Activated CD4-positive, alpha-beta T cell treated with anti-CD3 and anti-CD28 coated beads, Interleukin-2, amount 10 ng/mL, durations not matched to agents 24 days and 14 days (primary cell): ENCODE measurements at regions of chr11 and their contacts with region 1.

Region 1: GRCh38 chr11:64304316-64305072 is 830 bp upstream of the ESRRA start:
- DNase-seq: peak; percentile 98
- H3K4me3 Mint-ChIP-seq: peak overlapping the region; percentile 89
- H3K27ac Mint-ChIP-seq: peak overlapping the region; percentile 99
- H3K4me1 Mint-ChIP-seq: peaks cover 26% of the 10 kb centered on the region
- H3K27me3 Mint-ChIP-seq: peaks cover 17% of the 10 kb centered on the region

Region 2: GRCh38 chr11:64000026-64000739 is 304.3 kb before region 1 on chr11:
- intact Hi-C with region 1: loop called (anchors 2 kb)
- DNase-seq: peak; percentile 94
- H3K4me3 Mint-ChIP-seq: peak overlapping the region; percentile 39
- H3K27ac Mint-ChIP-seq: no peak overlapping the region
- H3K4me1 Mint-ChIP-seq: peaks cover 3% of the 10 kb centered on the region
- H3K27me3 Mint-ChIP-seq: peaks cover 1% of the 10 kb centered on the region

Region 3: GRCh38 chr11:64204464-64204989 is 100.0 kb before region 1 on chr11:
- intact Hi-C with region 1: loop called (anchors 1 kb)
- DNase-seq: peak; percentile 93
- H3K4me3 Mint-ChIP-seq: peak overlapping the region; percentile 69
- H3K27ac Mint-ChIP-seq: peak overlapping the region; percentile 80
- H3K4me1 Mint-ChIP-seq: peaks cover 33% of the 10 kb centered on the region
- H3K27me3 Mint-ChIP-seq: no peaks in the 10 kb centered on the region

Region 4: DNA sequence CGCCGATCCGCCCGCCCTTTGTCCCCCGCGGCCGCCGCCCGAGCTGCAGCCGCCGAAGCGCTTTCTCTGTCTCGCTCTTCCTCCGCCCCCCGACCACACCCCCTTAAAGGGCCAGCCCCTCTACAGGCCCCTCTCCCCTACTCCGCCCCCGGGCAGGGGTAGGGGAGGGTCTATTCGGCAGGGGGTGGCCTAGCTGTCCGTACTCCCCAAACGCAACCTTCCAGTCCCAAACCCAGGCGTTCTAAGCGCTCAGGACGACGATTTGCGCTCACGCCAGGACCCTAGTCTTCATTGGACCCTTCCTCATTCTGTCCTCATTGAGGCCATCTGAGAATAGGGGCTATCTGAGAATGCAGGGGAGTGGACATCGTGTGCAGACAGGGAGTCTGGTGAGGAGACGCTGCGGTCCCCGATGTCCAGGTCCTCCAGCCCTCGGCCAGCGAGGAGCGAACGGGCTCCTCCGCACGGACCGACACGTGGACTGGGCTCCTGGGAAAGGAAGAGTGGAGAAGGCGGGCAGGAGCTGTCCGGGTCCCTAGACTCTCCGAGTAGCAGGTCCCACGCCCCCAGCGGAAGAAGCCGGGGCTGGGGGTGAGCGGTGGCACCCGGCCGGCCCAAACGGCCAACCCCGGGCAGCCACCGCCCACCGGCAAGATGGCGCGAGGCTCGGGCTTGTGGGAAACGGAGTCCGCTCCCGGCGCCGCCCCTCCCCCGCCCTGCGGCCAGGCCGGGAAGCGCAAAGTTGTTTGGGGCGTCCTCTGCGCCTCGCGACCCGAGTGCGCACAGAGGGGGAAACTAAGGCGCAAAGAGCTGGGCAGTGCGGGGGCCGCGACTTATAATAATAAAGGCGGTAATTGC is 57.4 kb before region 1 on chr11 and contains the start of gene PPP1R14B:
- intact Hi-C with region 1: loop called (anchors 1 kb)
- DNase-seq: peak; percentile 95
- H3K4me3 Mint-ChIP-seq: peak within 1 kb of the TSS; percentile 90
- H3K27ac Mint-ChIP-seq: peak within 1 kb of the TSS; percentile 94
- H3K4me1 Mint-ChIP-seq: peaks cover 29% of the 10 kb centered on the region
- H3K27me3 Mint-ChIP-seq: no peaks in the 10 kb centered on the region
- total RNA-seq, gene PPP1R14B: 284 TPM in 2 replicates

Region 5: DNA sequence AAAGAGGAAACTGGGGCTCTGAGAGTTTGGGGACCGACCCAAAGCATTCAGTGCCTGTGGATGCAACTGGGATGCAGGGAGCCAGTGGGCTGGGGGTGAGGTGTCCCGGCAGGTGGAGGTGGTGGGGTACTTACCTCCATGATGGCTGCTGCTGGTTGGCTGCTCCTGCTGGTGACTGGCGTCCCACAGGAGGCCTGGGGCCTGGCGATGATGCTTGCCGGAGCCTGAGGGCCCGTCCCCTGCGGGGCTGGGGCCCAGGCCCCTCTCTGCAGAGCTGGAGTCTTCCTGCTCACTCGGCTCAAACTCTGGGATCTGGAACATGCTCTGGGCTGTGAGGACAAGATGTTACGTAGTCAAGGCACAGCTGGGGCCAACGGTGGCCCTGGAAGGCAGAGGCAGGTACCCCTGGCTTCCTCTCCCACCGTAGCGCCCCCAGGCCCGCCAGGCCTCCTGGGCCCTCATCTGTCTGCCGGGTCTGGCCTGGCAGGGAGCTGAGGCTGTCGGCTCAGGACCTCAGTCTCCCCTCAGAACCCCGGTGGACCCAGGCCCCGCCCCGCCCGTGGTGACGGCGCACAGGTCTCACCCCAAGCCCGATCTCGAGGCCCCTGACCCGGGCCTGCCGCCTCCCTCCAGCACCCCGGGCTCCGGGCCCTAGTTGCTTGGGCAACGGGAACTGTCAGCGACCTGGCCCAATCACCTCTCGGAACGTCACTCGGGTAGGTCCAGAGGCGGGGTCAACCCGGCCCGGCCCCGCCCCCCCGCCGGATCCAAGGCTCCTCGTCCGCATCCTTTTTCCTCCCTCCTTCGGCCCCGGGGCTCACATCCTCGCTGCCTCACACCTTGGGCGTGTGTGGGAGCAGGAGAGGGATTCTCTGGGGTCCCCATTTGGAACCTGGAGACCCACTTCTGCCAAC is 20.2 kb before region 1 on chr11 and contains the start of gene BAD:
- intact Hi-C with region 1: loop called (anchors 1 kb)
- DNase-seq: peak; percentile 97
- H3K4me3 Mint-ChIP-seq: peak within 1 kb of the TSS; percentile 89
- H3K27ac Mint-ChIP-seq: peak within 1 kb of the TSS; percentile 94
- H3K4me1 Mint-ChIP-seq: peaks cover 17% of the 10 kb centered on the region
- H3K27me3 Mint-ChIP-seq: no peaks in the 10 kb centered on the region
- total RNA-seq, gene BAD: 34.0 and 35.5 TPM in 2 replicates

Region 6: DNA sequence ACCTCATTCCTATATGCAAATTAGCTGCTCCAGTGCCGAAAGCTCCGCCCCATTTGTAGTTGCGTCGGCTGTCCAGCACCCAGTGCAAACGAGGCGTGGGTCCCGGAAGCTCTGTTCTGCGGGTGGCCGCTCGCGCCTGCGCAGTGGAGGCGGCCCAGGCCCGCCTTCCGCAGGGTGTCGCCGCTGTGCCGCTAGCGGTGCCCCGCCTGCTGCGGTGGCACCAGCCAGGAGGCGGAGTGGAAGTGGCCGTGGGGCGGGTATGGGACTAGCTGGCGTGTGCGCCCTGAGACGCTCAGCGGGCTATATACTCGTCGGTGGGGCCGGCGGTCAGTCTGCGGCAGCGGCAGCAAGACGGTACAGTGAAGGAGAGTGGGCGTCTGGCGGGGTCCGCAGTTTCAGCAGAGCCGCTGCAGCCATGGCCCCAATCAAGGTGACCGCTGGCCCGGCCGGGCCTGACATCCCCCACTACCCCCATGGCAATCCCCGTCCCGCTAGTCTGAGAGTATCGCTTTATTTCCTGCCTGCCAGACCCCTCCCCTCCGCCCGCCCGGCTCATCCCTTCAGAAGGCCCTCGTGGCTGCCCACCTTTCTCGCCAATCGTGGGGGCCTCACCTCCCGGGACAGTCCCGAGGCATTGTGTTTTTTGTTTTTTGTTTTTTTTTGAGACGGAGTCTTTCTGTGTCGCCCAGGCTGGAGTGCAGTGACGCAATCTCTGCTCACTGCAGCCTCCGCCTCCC is 13.6 kb after region 1 on chr11 and contains the start of gene PRDX5:
- intact Hi-C with region 1: loop called (anchors 1 kb)
- DNase-seq: peak; percentile 99
- H3K4me3 Mint-ChIP-seq: peak within 1 kb of the TSS; percentile 92
- H3K27ac Mint-ChIP-seq: peak within 1 kb of the TSS; percentile 97
- H3K4me1 Mint-ChIP-seq: peaks cover 32% of the 10 kb centered on the region
- H3K27me3 Mint-ChIP-seq: no peaks in the 10 kb centered on the region
- total RNA-seq, gene PRDX5: 98.0 and 104 TPM in 2 replicates

Region 7: GRCh38 chr11:64778508-64779346 is 474.2 kb after region 1 on chr11 and contains the start of gene SF1:
- intact Hi-C with region 1: loop called (anchors 5 kb)
- DNase-seq: peak; percentile 100
- H3K4me3 Mint-ChIP-seq: peak within 1 kb of the TSS; percentile 94
- H3K27ac Mint-ChIP-seq: peak within 1 kb of the TSS; percentile 98
- H3K4me1 Mint-ChIP-seq: peaks cover 49% of the 10 kb centered on the region
- H3K27me3 Mint-ChIP-seq: no peaks in the 10 kb centered on the region
- total RNA-seq, gene SF1: 522 and 525 TPM in 2 replicates

Region 8: DNA sequence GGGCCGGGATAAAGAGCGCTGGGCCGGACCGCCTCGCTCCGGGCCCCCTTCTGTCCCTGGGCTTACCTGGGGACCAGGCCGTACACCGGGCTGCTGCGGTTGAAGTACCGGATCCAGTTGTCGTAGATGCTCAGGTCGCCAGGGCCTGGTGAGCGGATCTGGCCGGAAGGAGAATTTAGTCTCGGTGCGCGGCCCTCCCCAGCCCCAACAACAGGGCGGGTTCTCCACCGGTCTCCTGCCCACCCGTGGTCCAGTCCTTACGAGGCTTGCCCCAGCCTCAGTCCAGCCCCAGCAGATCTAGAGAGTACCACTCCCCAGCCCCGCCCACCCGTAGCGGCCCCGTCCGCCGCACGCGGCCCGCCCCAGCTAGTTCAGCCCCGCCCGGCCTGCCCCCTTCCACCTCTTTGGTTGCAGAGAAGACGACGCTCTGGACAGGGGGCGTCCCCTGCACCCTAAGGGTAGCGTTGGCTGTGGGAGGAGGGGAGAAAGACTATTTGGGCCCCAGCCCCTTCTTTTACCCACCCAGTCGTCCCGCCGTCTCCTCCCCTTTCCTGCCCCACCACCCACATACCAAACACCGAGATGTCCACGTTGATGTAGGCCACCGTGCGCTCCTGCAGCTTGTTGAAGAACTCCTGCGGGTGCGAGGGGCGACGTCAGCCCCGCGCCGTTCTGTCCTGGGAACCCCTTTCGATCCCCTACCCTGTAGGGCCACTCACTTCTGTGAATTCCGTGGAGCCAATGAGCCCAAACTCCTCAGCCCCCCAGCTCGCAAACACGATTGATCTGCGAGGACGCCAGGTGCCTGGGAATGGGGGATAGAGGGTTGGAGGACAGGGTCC is 743.3 kb after region 1 on chr11:
- intact Hi-C with region 1: no loop called
- DNase-seq: peak; percentile 75
- H3K4me3 Mint-ChIP-seq: peak overlapping the region; percentile 82
- H3K27ac Mint-ChIP-seq: peak overlapping the region; percentile 79
- H3K4me1 Mint-ChIP-seq: peaks cover 17% of the 10 kb centered on the region
- H3K27me3 Mint-ChIP-seq: no peaks in the 10 kb centered on the region